Activated CD4-positive, alpha-beta T cell treated with anti-CD3 and anti-CD28 coated beads, Interleukin-2, amount 10 ng/mL, durations not matched to agents 24 days and 14 days (primary cell): ENCODE measurements at regions of chr6 and their contacts with region 1.

Region 1: GRCh38 chr6:111873178-111874024 is at the start of gene FYN:
- DNase-seq: peak; percentile 100
- H3K4me3 Mint-ChIP-seq: peak within 1 kb of the TSS; percentile 99
- H3K27ac Mint-ChIP-seq: peak within 1 kb of the TSS; percentile 96
- H3K4me1 Mint-ChIP-seq: peaks cover 34% of the 10 kb centered on the region
- H3K27me3 Mint-ChIP-seq: peaks cover 2% of the 10 kb centered on the region
- total RNA-seq, gene FYN: 331 and 341 TPM in 2 replicates

Region 2: DNA sequence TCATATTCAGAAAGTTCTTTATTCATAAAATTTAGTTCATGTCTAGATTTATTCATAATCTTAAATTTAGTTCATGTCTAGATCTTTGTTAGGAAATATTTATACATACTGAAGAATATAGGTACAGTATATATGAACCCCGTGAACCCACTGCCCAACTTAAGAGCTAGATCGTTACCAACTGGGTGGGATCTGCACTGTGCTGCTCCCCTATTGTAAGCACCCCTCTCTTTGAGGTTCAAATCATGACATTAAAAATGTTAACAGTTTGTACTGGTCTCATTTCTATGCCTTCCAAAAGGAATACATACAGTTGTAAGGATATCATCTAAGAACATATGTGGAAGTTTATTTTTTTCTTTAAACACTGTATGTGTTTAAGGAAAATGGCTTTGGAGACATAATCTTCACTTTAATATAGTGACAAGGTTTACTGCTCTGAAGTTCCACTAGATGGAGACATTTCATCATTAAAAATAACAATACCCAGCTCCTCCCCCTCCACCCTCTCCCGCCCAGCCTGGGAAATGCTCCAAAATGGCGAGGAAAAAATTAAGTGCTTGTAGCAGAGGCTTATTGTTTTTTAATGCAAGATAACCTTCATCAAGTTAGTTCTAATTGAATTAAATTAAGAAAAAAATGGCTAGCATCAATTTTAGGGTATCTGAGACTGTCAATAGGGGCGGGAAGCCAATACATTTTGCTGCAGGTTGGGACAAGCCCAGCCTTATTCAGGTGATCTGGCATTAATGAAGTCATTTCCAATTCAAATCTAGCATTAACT is 163.6 kb before region 1 on chr6:
- intact Hi-C with region 1: loop called (anchors 2 kb)
- DNase-seq: peak; percentile 85
- H3K4me3 Mint-ChIP-seq: no peak overlapping the region
- H3K27ac Mint-ChIP-seq: peak overlapping the region; percentile 59
- H3K4me1 Mint-ChIP-seq: peaks cover 56% of the 10 kb centered on the region
- H3K27me3 Mint-ChIP-seq: no peaks in the 10 kb centered on the region

Region 3: GRCh38 chr6:111804627-111805235 is 68.7 kb before region 1 on chr6:
- intact Hi-C with region 1: loop called (anchors 1 kb)
- DNase-seq: peak; percentile 90
- H3K4me3 Mint-ChIP-seq: peak overlapping the region; percentile 82
- H3K27ac Mint-ChIP-seq: peak overlapping the region; percentile 99
- H3K4me1 Mint-ChIP-seq: peaks cover 82% of the 10 kb centered on the region
- H3K27me3 Mint-ChIP-seq: no peaks in the 10 kb centered on the region

Region 4: DNA sequence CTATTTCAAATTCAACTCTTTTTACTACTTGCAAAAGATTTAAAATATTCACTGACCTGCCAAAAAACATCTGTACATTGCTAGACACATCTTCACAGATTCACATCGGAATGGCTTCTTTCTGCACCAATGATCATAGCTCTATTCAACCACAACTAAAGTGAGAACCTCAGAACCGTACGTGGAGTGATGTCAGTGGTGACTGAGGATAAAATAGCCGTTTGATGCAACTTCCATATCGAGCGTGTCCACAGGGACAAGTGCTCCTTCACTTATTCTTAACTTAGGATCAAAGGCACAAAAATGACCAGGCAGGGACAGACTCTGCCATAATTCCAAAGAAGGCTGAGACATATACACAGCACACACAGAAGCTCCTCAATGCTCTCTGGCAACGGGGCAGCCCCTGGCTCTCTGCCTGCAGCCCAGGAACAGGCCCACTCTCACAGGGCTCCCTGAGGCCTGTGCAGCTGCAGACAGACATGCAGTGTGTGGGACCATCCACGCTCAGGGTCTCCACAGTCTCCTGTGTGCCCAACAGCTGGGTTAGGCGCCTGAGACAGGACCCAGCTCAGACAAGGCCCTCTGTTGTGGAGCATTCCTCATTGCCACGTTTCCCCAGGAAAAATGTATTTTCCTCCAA is 23.0 kb before region 1 on chr6:
- intact Hi-C with region 1: loop called (anchors 1 kb)
- DNase-seq: no peak
- H3K4me3 Mint-ChIP-seq: peak overlapping the region; percentile 51
- H3K27ac Mint-ChIP-seq: peak overlapping the region; percentile 73
- H3K4me1 Mint-ChIP-seq: peaks cover 79% of the 10 kb centered on the region
- H3K27me3 Mint-ChIP-seq: no peaks in the 10 kb centered on the region

Region 5: DNA sequence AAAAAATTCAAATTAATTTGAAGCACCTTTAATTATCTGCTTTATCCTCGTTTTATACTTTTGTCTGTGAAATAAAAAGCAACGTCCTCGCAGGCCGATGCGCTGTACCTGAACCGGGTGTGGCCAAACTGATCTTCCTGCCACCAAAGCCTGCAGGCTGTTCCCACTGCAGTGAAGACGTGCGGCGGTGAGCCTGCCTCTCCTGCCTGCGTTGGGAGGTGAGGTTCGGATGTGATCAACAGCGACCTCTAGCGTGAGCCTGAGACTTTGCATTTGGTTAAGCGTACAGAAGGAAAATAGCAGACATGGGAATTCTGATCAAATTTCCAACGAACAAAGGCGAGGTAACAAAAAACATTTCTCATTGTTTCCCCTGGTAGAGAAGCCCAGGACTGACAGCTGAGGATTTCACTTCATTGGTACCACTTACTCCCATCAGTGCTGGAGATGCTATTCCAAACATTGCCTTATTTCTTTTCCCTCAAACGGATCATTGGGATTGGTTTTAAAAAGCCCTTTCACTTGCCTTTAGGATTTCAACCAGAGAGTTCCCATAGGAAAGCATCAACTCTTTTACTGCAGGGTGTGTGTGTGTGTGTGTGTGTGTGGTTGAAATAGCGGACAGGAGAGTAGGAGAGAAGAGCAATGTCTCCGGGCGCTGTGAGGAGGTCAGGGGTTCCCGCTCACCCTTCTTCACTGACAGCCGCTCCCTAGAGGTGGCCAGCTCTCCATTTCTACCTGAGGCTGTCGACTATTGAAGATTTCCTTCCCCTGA is 123.9 kb after region 1 on chr6:
- intact Hi-C with region 1: loop called (anchors 1 kb)
- DNase-seq: peak; percentile 93
- H3K4me3 Mint-ChIP-seq: peak overlapping the region; percentile 64
- H3K27ac Mint-ChIP-seq: no peak overlapping the region
- H3K4me1 Mint-ChIP-seq: peaks cover 40% of the 10 kb centered on the region
- H3K27me3 Mint-ChIP-seq: no peaks in the 10 kb centered on the region

Region 6: DNA sequence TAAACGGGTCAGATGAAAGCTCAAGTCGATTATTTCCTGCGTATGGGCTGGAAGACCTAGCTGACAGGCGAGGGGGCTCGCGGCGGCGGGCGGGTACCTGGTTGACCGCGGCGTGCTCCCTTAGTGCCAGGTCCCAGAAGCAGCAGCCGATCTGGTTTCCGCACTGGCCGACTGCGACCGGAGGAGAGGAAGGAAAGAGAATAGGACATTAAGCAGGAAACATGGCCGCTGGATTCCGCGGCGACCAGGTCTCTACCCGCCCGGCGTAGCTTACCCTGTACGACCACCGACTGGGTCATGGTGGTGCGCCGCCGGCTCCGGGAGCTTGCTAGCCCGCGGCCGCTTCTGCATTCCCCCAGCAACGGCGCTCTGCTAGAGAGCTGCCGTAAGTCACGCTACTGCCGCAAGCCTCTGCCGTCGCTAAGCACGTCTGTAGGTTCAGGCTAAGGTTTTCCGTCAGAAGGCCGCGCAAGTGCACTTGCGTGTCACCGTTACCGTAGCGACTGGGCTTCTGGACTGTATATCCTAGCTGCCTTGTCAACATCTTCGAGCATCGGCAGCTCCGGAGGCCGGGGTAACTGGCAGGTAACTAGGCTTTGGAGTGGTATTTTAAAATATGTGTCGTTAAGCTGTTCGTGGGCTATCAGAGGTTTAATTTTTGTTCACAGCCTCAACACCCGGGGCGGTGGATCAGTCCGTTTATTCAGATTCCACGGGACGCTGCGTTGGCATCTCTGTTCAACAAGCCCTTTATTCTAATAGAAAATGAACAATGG is 213.9 kb after region 1 on chr6 and contains the starts of genes FAM229B and TUBE1:
- intact Hi-C with region 1: loop called (anchors 5 kb)
- DNase-seq: peak; percentile 96
- H3K4me3 Mint-ChIP-seq: no peak within 1 kb of the TSS
- H3K27ac Mint-ChIP-seq: no peak within 1 kb of the TSS
- H3K4me1 Mint-ChIP-seq: peaks cover 7% of the 10 kb centered on the region
- H3K27me3 Mint-ChIP-seq: peaks cover 35% of the 10 kb centered on the region
- total RNA-seq, gene FAM229B: 0.91 and 0.97 TPM in 2 replicates
- total RNA-seq, gene TUBE1: 24.3 and 30.1 TPM in 2 replicates